Naive thymus-derived CD4-positive, alpha-beta T cell (primary cell): ENCODE measurements at regions of chr21 and their contacts with region 1.

Region 1: DNA sequence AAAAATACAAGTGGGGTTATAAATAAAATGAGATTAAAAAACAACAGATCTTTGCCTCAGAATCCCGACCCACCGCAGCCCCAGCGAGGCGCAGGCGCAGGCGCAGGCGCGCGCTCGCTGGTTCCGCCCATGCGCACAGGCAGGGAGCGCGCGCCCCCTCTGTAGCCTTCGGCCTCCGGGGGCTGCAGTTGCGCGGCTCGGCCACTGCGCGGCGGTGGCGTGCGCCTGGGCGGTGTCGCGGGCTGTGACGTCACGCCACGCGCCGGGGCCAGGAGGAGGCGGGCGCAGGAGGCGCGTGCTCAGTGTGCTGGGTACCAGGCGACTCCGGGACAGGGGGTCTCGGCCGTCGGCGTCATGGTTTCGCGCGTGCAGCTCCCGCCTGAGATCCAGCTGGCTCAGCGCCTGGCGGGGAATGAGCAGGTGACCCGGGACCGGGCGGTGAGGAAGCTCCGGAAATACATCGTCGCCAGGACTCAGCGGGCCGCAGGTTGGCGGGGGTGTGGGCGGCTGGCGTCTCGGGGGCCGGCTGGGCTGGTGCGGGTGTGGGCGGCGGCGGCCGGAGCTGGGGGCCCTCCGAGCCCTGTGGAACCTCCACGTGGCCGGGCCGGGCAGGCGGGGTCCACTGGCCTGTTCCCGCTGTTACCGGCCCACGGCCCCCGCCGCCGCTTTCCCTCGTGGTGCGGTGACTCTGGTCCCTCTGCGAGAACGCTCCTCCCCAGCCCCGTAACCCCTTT is at the start of gene RRP1:
- DNase-seq: peak; percentile 88 to 100 (median 96)
- ATAC-seq: peak; percentile 99
- H3K4me3 ChIP-seq: peak within 1 kb of the TSS; percentile 87
- H3K4me3 Mint-ChIP-seq: peak within 1 kb of the TSS; percentile 86 to 94 (median 92)
- H3K27ac ChIP-seq: peak within 1 kb of the TSS; percentile 84
- H3K27ac Mint-ChIP-seq: peak within 1 kb of the TSS; percentile 74 to 95 (median 91)
- H3K4me1 ChIP-seq: peaks cover 5 to 10% of the 10 kb centered on the region in 2 donors
- H3K4me1 Mint-ChIP-seq: peaks cover 7 to 29% (median 21%) of the 10 kb centered on the region in 7 donors
- H3K27me3 ChIP-seq: no peaks in the 10 kb centered on the region
- H3K27me3 Mint-ChIP-seq: no peaks in the 10 kb centered on the region
- total RNA-seq, gene RRP1: 24.2 to 33.1 (median 28.8) TPM

Region 2: GRCh38 chr21:42892931-42893755 is 896.3 kb before region 1 on chr21 and contains the start of gene NDUFV3:
- CTCF ChIA-PET with region 1: no interaction called
- POLR2A ChIA-PET with region 1: no interaction called
- intact Hi-C with region 1: loop called in 1 of 2 experiments (anchors 2 kb)
- DNase-seq: peak; percentile 96 to 100 (median 98)
- ATAC-seq: peak; percentile 96
- H3K4me3 ChIP-seq: peak within 1 kb of the TSS; percentile 94
- H3K4me3 Mint-ChIP-seq: peak within 1 kb of the TSS; percentile 87 to 96 (median 90)
- H3K27ac ChIP-seq: peak within 1 kb of the TSS; percentile 97
- H3K27ac Mint-ChIP-seq: peak within 1 kb of the TSS; percentile 92 to 98 (median 97)
- H3K4me1 ChIP-seq: peaks cover 6 to 8% of the 10 kb centered on the region in 2 donors
- H3K4me1 Mint-ChIP-seq: peaks cover 14 to 25% (median 22%) of the 10 kb centered on the region in 7 donors
- H3K27me3 ChIP-seq: no peaks in the 10 kb centered on the region
- H3K27me3 Mint-ChIP-seq: no peaks in the 10 kb centered on the region
- total RNA-seq, gene NDUFV3: 25.3 to 33.1 (median 30.9) TPM

Region 3: GRCh38 chr21:43718872-43719747 is 70.3 kb before region 1 on chr21 and contains the start of gene PDXK:
- CTCF ChIA-PET with region 1: no interaction called
- POLR2A ChIA-PET with region 1: no interaction called
- intact Hi-C with region 1: loop called in 1 of 2 experiments (anchors 1 kb)
- DNase-seq: peak; percentile 73 to 90 (median 77)
- ATAC-seq: peak; percentile 92
- H3K4me3 ChIP-seq: peak within 1 kb of the TSS; percentile 90
- H3K4me3 Mint-ChIP-seq: peak within 1 kb of the TSS; percentile 77 to 93 (median 87)
- H3K27ac ChIP-seq: peak within 1 kb of the TSS; percentile 86
- H3K27ac Mint-ChIP-seq: peak within 1 kb of the TSS; percentile 43 to 86 (median 72)
- H3K4me1 ChIP-seq: peaks cover 12 to 19% of the 10 kb centered on the region in 2 donors
- H3K4me1 Mint-ChIP-seq: peaks cover 20 to 31% (median 26%) of the 10 kb centered on the region in 7 donors
- H3K27me3 ChIP-seq: no peaks in the 10 kb centered on the region
- H3K27me3 Mint-ChIP-seq: peaks cover 0 to 19% (median 0%) of the 10 kb centered on the region in 5 donors
- total RNA-seq, gene PDXK: 71.1 to 103 (median 97.0) TPM

Region 4: DNA sequence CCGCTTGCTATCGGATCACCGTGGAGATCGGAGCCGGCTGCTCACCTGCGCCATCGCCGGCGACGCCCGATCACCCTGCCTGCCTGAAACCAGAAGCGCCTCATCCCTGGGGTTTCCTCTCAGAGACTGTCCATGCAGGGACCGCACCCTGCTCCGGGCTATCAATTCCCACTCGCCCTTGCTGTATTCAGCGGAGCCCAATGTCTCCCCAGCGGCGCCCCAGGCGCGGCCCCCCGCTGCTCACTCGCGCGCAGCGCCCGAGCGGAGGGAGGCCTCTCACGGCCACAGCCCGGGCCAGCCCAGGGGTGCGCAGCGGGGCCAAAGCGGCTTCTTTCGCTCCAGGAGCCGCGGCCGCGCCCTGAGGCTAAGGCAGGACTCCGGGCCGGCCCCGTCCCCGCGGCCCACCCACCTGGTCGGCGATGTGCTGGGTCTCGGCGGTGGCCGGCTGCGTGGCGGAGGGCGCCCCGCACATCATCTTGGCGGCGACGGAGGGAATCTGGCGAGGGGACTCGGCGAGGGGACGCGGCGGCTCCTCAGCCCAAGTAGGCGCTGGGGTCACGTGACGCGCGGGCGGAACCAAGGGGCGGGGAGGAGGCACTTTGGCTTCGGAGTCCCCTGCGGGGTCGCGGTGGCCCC is 13.5 kb before region 1 on chr21 and contains the start of gene CSTB:
- CTCF ChIA-PET with region 1: interaction called, 3 read pairs
- POLR2A ChIA-PET with region 1: no interaction called
- intact Hi-C with region 1: loop called (anchors 1 kb)
- DNase-seq: peak; percentile 62 to 91 (median 78)
- ATAC-seq: peak; percentile 85
- H3K4me3 ChIP-seq: peak within 1 kb of the TSS; percentile 64
- H3K4me3 Mint-ChIP-seq: peak within 1 kb of the TSS; percentile 89 to 96 (median 94)
- H3K27ac ChIP-seq: peak within 1 kb of the TSS; percentile 77
- H3K27ac Mint-ChIP-seq: peak within 1 kb of the TSS; percentile 80 to 91 (median 84)
- H3K4me1 ChIP-seq: peaks cover 11 to 18% of the 10 kb centered on the region in 2 donors
- H3K4me1 Mint-ChIP-seq: peaks cover 29 to 59% (median 41%) of the 10 kb centered on the region in 7 donors
- H3K27me3 ChIP-seq: no peaks in the 10 kb centered on the region
- H3K27me3 Mint-ChIP-seq: no peaks in the 10 kb centered on the region
- total RNA-seq, gene CSTB: 14.7 to 66.5 (median 36.6) TPM

Region 5: GRCh38 chr21:43916691-43917514 is 127.5 kb after region 1 on chr21:
- CTCF ChIA-PET with region 1: no interaction called
- POLR2A ChIA-PET with region 1: no interaction called
- intact Hi-C with region 1: loop called in 1 of 2 experiments (anchors 2 kb)
- DNase-seq: peak; percentile 56 to 83 (median 80)
- ATAC-seq: peak; percentile 93
- H3K4me3 ChIP-seq: peak overlapping the region; percentile 71
- H3K4me3 Mint-ChIP-seq: peak overlapping the region; percentile 83 to 95 (median 89)
- H3K27ac ChIP-seq: peak overlapping the region; percentile 84
- H3K27ac Mint-ChIP-seq: peak overlapping the region; percentile 86 to 96 (median 94)
- H3K4me1 ChIP-seq: peaks cover 25 to 33% of the 10 kb centered on the region in 2 donors
- H3K4me1 Mint-ChIP-seq: peaks cover 47 to 74% (median 61%) of the 10 kb centered on the region in 7 donors
- H3K27me3 ChIP-seq: no peaks in the 10 kb centered on the region
- H3K27me3 Mint-ChIP-seq: peaks cover 0 to 4% (median 0%) of the 10 kb centered on the region in 5 donors

Region 6: GRCh38 chr21:43975495-43975993 is 186.1 kb after region 1 on chr21:
- CTCF ChIA-PET with region 1: interaction called, 3 read pairs
- POLR2A ChIA-PET with region 1: no interaction called
- intact Hi-C with region 1: loop called in 1 of 2 experiments (anchors 1 kb)
- DNase-seq: peak; percentile 70 to 87 (median 81)
- ATAC-seq: peak; percentile 95
- H3K4me3 ChIP-seq: no peak overlapping the region
- H3K4me3 Mint-ChIP-seq: no peak overlapping the region
- H3K27ac ChIP-seq: no peak overlapping the region
- H3K27ac Mint-ChIP-seq: peak overlapping the region in 6 of 9 donors; percentile 0 to 94 (median 58)
- H3K4me1 ChIP-seq: peaks cover 0 to 4% of the 10 kb centered on the region in 2 donors
- H3K4me1 Mint-ChIP-seq: peaks cover 11 to 17% (median 15%) of the 10 kb centered on the region in 7 donors
- H3K27me3 ChIP-seq: no peaks in the 10 kb centered on the region
- H3K27me3 Mint-ChIP-seq: no peaks in the 10 kb centered on the region